ENCODE measurements at regions of chr22 and their contacts with region 1.

Region 1: GRCh38 chr22:30089655-30089974 is 9.4 kb downstream of the HORMAD2 start:
- DNase-seq: no peak
- CTCF ChIP-seq: no peak

Region 2: GRCh38 chr22:29587938-29588699 is 501.5 kb before region 1 on chr22:
- CTCF ChIA-PET with region 1: interaction called, 11 read pairs
- POLR2A ChIA-PET with region 1: no interaction called
- DNase-seq: no peak
- CTCF ChIP-seq: no peak

Region 3: GRCh38 chr22:29593923-29594322 is 495.7 kb before region 1 on chr22:
- CTCF ChIA-PET with region 1: interaction called, 11 read pairs
- POLR2A ChIA-PET with region 1: no interaction called
- DNase-seq: no peak
- CTCF ChIP-seq: no peak

Region 4: GRCh38 chr22:29625090-29625825 is 464.4 kb before region 1 on chr22:
- CTCF ChIA-PET with region 1: interaction called, 11 read pairs
- POLR2A ChIA-PET with region 1: interaction called, 6 read pairs
- DNase-seq: peak; percentile 40
- CTCF ChIP-seq: peak; percentile 81

Region 5: GRCh38 chr22:29820961-29821789 is 268.4 kb before region 1 on chr22:
- CTCF ChIA-PET with region 1: no interaction called
- POLR2A ChIA-PET with region 1: no interaction called
- DNase-seq: peak; percentile 78
- CTCF ChIP-seq: no peak

Measured in GM10248 (cell line).